ENCODE measurements at regions of chr3 and their contacts with region 1.

Region 1: GRCh38 chr3:184135149-184135910 is at the start of gene EIF2B5:
- DNase-seq: peak; percentile 67 to 95 (median 87)
- ATAC-seq: peak; percentile 89
- H3K4me3 ChIP-seq: peak within 1 kb of the TSS; percentile 79 to 91
- H3K4me3 Mint-ChIP-seq: peak within 1 kb of the TSS; percentile 100
- H3K27ac ChIP-seq: peak within 1 kb of the TSS; percentile 76 to 83
- H3K27ac Mint-ChIP-seq: peak within 1 kb of the TSS; percentile 98
- H3K4me1 ChIP-seq: peaks cover 25% of the 10 kb centered on the region
- H3K4me1 Mint-ChIP-seq: peaks cover 41% of the 10 kb centered on the region
- H3K27me3 ChIP-seq: no peaks in the 10 kb centered on the region
- H3K27me3 Mint-ChIP-seq: no peaks in the 10 kb centered on the region
- CTCF ChIP-seq: no peak
- total RNA-seq, gene EIF2B5: 52.6 to 61.9 TPM

Region 2: GRCh38 chr3:184017672-184018423 is 117.5 kb before region 1 on chr3 and contains the start of gene ABCC5:
- CTCF ChIA-PET with region 1: no interaction called
- POLR2A ChIA-PET with region 1: interaction called, 3 read pairs
- intact Hi-C with region 1: loop called (anchors 1 to 2 kb)
- DNase-seq: peak; percentile 60 to 91 (median 80)
- ATAC-seq: peak; percentile 94
- H3K4me3 ChIP-seq: peak within 1 kb of the TSS; percentile 94 to 98
- H3K4me3 Mint-ChIP-seq: peak within 1 kb of the TSS; percentile 99
- H3K27ac ChIP-seq: peak within 1 kb of the TSS; percentile 51 to 56
- H3K27ac Mint-ChIP-seq: peak within 1 kb of the TSS; percentile 83
- H3K4me1 ChIP-seq: peaks cover 11% of the 10 kb centered on the region
- H3K4me1 Mint-ChIP-seq: peaks cover 32% of the 10 kb centered on the region
- H3K27me3 ChIP-seq: no peaks in the 10 kb centered on the region
- H3K27me3 Mint-ChIP-seq: peaks cover 12% of the 10 kb centered on the region
- CTCF ChIP-seq: peak; percentile 76
- total RNA-seq, gene ABCC5: 7.4 to 8.3 TPM

Region 3: DNA sequence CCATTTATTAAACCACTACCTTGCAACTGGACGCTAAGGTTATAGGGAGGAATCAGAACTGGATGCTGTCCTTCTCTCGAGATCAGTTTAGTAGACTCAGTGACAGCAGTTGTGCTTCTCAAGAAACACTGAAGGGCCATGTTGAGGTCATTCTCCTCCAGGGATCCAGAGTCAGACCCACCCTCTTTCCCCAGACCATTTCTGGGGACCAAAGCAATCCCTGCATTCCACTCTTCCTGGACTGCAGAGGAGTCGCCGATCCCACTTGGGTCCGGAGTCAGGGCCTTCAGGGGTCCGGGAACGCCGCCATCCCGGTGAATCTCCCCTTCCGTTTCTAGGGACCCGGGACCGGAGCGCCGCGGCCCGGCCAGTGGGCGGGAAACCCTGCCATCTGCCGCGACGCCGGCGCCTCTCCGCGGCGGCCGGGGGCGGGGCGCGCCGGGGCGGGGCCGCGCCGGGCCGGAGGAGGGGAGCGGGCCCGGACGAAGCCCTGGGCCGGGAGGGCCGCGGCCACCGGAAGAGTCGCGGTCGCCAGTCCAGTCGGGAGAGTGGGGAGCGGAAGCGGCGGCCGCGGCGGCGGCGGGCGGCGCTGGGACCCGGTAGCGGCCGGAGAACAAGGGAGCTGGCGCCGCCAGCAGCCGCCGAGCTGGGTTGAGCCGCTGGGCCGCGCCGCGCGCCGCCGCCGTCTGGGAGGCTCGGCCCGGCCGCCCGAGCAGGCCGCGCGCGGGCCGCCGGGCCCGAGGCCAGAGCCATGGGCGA is 19.7 kb after region 1 on chr3 and contains the start of gene DVL3:
- CTCF ChIA-PET with region 1: interaction called, 4 read pairs
- POLR2A ChIA-PET with region 1: interaction called, 6 read pairs
- intact Hi-C with region 1: loop called (anchors 1 kb)
- DNase-seq: peak in 8 of 9 experiments; percentile 20 to 69 (median 40)
- ATAC-seq: peak; percentile 58
- H3K4me3 ChIP-seq: peak within 1 kb of the TSS; percentile 62 to 85
- H3K4me3 Mint-ChIP-seq: peak within 1 kb of the TSS; percentile 92
- H3K27ac ChIP-seq: peak within 1 kb of the TSS; percentile 48 to 72
- H3K27ac Mint-ChIP-seq: peak within 1 kb of the TSS; percentile 83
- H3K4me1 ChIP-seq: peaks cover 21% of the 10 kb centered on the region
- H3K4me1 Mint-ChIP-seq: peaks cover 27% of the 10 kb centered on the region
- H3K27me3 ChIP-seq: no peaks in the 10 kb centered on the region
- H3K27me3 Mint-ChIP-seq: no peaks in the 10 kb centered on the region
- CTCF ChIP-seq: no peak
- total RNA-seq, gene DVL3: 23.1 to 23.9 TPM